CD14-positive monocyte (primary cell): ENCODE measurements at regions of chr6 and their contacts with region 1.

Region 1: DNA sequence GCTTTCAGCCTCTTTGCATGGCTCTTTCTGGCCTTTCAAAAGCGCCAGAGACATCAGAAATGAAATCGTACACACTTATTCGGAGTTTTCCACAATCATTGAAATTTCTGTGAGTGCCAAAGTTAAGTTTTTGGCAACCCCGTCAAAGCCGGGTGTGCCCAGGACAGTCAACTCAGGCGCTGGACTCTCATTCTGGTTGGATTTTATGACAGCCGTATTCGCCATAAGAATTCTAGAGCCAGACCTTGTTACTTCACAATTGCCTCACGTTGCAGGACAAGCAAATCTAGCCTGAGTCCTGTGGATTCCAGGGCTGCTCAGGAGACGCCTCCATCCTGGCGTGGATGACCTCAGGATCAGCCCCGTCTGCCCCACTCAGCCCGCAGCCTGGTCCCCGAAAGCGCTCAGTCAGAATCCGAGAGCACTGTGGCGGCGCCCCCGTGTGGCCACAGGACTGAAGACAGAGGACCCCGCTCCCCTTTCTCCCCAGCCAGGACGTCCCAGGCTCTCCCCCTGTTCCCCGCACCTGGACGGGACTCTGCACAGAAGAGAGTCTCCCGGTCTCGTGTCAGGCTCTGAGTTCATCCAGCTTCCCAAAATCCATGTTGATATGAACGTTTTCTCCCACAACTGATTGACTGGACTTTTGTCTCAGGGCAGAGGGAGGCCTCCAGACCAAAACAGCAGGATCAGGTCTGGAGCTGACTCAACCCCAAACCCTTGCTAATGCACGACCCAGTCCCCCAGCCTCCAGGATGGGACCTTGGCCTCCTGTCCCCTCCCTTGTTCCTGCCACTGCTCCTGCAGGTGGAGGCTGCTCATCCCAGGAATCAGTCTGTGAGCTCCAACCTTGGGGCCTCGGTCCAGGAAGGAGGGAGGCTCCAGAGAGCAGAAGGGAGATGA is 38.2 kb downstream of the MICA start:
- DNase-seq: peak; percentile 71 to 75 (median 73)
- H3K4me3 ChIP-seq: no peak overlapping the region
- H3K4me3 Mint-ChIP-seq: peak overlapping the region in 1 of 2 donors; percentile 21
- H3K27ac ChIP-seq: no peak overlapping the region
- H3K27ac Mint-ChIP-seq: peak overlapping the region in 1 of 7 donors; percentile 15
- H3K4me1 ChIP-seq: no peaks in the 10 kb centered on the region
- H3K4me1 Mint-ChIP-seq: peaks cover 6% of the 10 kb centered on the region
- H3K27me3 ChIP-seq: peaks cover 6 to 44% of the 10 kb centered on the region in 2 donors
- H3K27me3 Mint-ChIP-seq: peaks cover 24 to 62% (median 29%) of the 10 kb centered on the region in 3 donors
- CTCF ChIP-seq: peak; percentile 87

Region 2: GRCh38 chr6:31399589-31400466 is 41.8 kb before region 1 on chr6:
- intact Hi-C with region 1: loop called (anchors 2 kb)
- DNase-seq: peak; percentile 61 to 70 (median 69)
- H3K4me3 ChIP-seq: peak overlapping the region; percentile 71 to 98 (median 93)
- H3K4me3 Mint-ChIP-seq: peak overlapping the region; percentile 97 to 98
- H3K27ac ChIP-seq: peak overlapping the region; percentile 88 to 90
- H3K27ac Mint-ChIP-seq: peak overlapping the region; percentile 95 to 99 (median 98)
- H3K4me1 ChIP-seq: peaks cover 45 to 61% of the 10 kb centered on the region in 2 donors
- H3K4me1 Mint-ChIP-seq: peaks cover 60% of the 10 kb centered on the region
- H3K27me3 ChIP-seq: no peaks in the 10 kb centered on the region
- H3K27me3 Mint-ChIP-seq: peaks cover 0 to 5% (median 3%) of the 10 kb centered on the region in 3 donors
- CTCF ChIP-seq: peak; percentile 95